Activated CD4-positive, alpha-beta memory T cell treated with anti-CD3 and anti-CD28 coated beads for 36 hours (primary cell): ENCODE measurements at regions of chr1 and their contacts with region 1.

Region 1: GRCh38 chr1:92831762-92832536 is at the start of gene RPL5:
- DNase-seq: peak; percentile 98
- H3K4me3 Mint-ChIP-seq: peak within 1 kb of the TSS; percentile 100
- H3K27ac Mint-ChIP-seq: peak within 1 kb of the TSS; percentile 95
- H3K4me1 Mint-ChIP-seq: peaks cover 39% of the 10 kb centered on the region
- H3K27me3 Mint-ChIP-seq: peaks cover 3% of the 10 kb centered on the region
- total RNA-seq, gene RPL5: 1,530 to 1,539 TPM

Region 2: DNA sequence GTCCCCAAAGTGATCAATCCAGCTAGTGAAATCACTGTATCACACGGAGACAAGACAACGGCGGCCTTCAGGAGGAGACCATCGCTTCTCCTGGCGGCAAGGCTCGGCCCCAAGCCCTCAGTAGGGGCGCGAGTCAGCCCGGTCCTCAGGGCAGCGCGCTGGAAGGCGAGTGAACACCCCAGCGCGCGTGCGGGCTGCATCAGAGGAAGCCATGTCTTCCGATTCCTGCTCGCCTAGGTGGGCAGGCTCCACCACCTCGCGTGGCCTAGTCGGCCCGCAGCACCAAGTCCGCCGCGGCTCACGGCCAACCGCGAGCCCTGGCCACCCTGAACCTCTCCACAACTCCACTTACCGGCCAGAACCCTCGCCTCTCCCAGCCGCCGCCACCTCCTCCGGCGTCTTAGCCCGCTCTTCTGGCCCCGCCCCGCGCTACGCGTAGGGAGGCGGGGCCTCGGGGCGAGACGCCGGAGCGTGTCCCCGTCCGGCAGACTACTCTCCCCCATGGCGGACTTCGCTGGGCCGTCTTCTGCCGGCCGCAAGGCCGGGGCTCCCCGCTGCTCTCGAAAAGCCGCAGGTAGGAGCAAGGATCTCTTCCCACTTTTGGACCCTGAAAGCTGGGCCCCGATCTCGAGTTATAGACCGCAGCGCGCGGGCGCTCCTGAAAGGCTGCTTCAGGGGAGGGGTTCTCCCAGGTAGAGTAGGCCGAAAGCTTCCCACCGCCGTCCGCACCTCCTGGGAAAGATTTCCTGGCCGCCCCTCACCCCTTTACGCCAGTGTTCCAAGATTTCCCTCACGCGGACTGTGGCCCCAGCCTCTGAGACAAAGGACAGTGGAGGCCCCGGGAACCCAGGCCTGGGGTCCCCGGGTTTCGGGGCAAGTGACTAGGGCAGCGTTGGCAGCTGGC is 533.1 kb before region 1 on chr1 and contains the starts of genes GLMN and RPAP2:
- CTCF ChIA-PET with region 1: no interaction called
- POLR2A ChIA-PET with region 1: interaction called, 3 read pairs
- intact Hi-C with region 1: loop called (anchors 1 kb)
- DNase-seq: peak; percentile 78
- H3K4me3 Mint-ChIP-seq: peak within 1 kb of the TSS; percentile 91
- H3K27ac Mint-ChIP-seq: peak within 1 kb of the TSS; percentile 95
- H3K4me1 Mint-ChIP-seq: peaks cover 31% of the 10 kb centered on the region
- H3K27me3 Mint-ChIP-seq: no peaks in the 10 kb centered on the region
- total RNA-seq, gene GLMN: 10.9 to 13.3 TPM
- total RNA-seq, gene RPAP2: 28.6 to 31.6 TPM

Region 3: GRCh38 chr1:92583821-92584760 is 247.9 kb before region 1 on chr1:
- CTCF ChIA-PET with region 1: no interaction called
- POLR2A ChIA-PET with region 1: interaction called, 3 read pairs
- intact Hi-C with region 1: loop called (anchors 10 kb)
- DNase-seq: no peak
- H3K4me3 Mint-ChIP-seq: peak overlapping the region; percentile 65
- H3K27ac Mint-ChIP-seq: peak overlapping the region; percentile 92
- H3K4me1 Mint-ChIP-seq: peaks cover 64% of the 10 kb centered on the region
- H3K27me3 Mint-ChIP-seq: no peaks in the 10 kb centered on the region

Region 4: GRCh38 chr1:92817986-92818764 is 13.8 kb before region 1 on chr1:
- CTCF ChIA-PET with region 1: interaction called, 16 read pairs
- POLR2A ChIA-PET with region 1: interaction called, 4 read pairs
- intact Hi-C with region 1: no loop called
- DNase-seq: no peak
- H3K4me3 Mint-ChIP-seq: no peak overlapping the region
- H3K27ac Mint-ChIP-seq: no peak overlapping the region
- H3K4me1 Mint-ChIP-seq: no peaks in the 10 kb centered on the region
- H3K27me3 Mint-ChIP-seq: peaks cover 8% of the 10 kb centered on the region

Region 5: DNA sequence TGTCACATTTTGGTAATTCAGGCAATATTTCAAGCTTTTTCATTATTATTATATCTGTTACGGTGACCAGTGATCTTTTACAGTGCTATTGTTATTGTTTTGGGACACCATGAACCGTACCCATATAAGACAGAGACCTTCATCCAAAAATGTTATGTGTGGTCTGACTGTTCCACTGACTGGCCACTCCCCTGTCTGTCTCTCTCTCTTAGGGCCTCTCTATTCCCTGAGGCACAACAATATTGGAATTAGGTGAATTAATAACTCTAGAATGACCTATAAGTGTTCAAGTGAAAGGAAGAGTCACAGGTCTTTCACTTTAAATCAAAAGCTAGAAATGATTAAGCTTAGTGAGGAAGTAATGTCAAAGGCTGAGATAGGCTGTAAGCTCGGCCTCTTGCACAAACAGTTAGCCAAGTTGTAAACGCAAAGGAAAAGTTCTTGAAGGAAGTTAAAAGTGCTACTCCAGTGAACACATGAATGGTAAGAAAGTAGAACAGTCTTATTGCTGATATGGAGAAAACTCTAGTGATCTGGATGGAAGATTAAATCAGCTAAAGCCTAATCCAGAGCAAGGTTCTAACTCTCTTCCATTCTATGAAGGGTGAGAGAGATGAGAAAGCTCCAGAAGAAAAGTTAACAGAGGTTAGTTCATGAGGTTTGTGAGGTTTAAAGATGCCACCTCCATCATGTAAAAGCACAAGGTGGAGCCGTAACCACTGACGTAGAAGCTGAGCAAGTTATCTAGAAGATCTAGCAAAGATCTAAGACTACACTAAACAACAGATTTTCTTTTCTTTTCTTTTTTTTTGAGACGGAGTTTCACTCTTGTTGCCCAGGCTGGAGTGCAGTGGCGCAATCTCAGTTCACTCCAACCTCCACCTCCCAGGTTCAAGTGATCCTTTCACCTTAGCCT is 149.0 kb after region 1 on chr1:
- CTCF ChIA-PET with region 1: no interaction called
- POLR2A ChIA-PET with region 1: interaction called, 10 read pairs
- intact Hi-C with region 1: no loop called
- DNase-seq: peak; percentile 55
- H3K4me3 Mint-ChIP-seq: peak overlapping the region; percentile 58
- H3K27ac Mint-ChIP-seq: peak overlapping the region; percentile 98
- H3K4me1 Mint-ChIP-seq: peaks cover 58% of the 10 kb centered on the region
- H3K27me3 Mint-ChIP-seq: no peaks in the 10 kb centered on the region

Region 6: DNA sequence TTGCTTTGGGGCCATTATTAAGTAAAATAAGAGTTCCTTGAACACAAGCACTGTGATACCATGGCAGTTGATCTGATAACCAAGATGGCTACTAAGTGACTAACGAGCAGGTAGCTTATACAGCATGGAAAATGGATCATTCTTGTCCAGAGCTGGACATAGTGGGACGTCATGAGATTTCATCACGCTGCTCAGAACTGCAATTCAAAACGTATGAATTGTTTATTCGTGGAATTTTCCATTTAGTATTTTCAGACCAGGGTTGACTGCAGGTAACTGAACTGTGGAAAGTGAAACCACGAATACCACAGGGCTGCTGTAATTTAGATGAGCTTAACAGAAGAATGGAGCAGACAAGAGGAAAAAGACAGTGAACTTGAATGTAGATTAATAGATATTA is 387.5 kb after region 1 on chr1:
- CTCF ChIA-PET with region 1: no interaction called
- POLR2A ChIA-PET with region 1: no interaction called
- intact Hi-C with region 1: no loop called
- DNase-seq: peak; percentile 30
- H3K4me3 Mint-ChIP-seq: peak overlapping the region; percentile 61
- H3K27ac Mint-ChIP-seq: peak overlapping the region; percentile 70
- H3K4me1 Mint-ChIP-seq: peaks cover 26% of the 10 kb centered on the region
- H3K27me3 Mint-ChIP-seq: no peaks in the 10 kb centered on the region

Region 7: GRCh38 chr1:93345633-93346420 is 513.9 kb after region 1 on chr1 and contains the start of gene DR1:
- CTCF ChIA-PET with region 1: no interaction called
- POLR2A ChIA-PET with region 1: no interaction called
- intact Hi-C with region 1: loop called (anchors 5 kb)
- DNase-seq: peak; percentile 95
- H3K4me3 Mint-ChIP-seq: peak within 1 kb of the TSS; percentile 94
- H3K27ac Mint-ChIP-seq: peak within 1 kb of the TSS; percentile 98
- H3K4me1 Mint-ChIP-seq: peaks cover 22% of the 10 kb centered on the region
- H3K27me3 Mint-ChIP-seq: no peaks in the 10 kb centered on the region
- total RNA-seq, gene DR1: 74.9 to 77.4 TPM